BJ (cell line): ENCODE measurements at regions of chr22 and their contacts with region 1.

Region 1: DNA sequence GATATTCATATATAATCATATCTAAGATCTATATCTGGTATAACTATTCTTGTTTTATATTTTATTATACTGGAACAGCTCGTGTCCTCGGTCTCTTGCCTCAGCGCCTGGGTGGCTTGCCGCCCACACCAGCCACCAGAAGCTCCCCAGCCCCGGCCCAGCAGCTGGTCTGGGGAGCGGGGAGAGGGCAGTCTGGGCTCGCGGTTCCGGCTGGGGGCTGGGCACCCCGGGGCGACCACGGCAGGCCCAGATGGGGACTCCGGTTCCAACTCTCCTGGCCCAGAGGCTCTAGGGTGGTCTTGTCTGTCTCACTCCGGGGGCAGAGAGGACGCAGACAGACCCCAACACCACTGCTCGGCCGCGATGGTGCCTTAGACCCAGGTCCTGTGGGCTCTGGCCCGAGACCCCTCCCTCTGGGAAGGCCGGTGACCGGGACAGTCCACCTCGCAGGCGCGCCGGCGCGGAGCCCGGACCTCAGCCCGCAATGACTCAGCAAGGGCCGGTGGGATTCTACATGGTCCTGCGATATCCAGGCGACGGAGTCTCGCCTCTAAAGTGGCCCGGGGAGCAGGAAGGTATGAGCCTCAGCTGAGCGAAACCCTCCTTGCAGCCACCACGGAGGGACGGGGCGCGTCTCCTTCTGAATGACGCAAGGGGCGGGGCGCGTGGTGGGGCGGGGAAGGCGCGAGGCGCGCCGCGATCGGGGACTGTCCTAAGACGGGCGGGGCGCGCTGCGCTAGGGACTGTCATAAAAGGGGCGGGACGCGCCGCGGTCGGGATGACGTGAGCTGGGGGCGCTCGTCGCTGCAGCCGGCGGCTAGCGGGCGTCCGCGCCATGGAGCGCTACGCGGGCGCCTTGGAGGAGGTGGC is at the start of gene DGCR6:
- DNase-seq: no peak
- H3K4me3 ChIP-seq: no peak within 1 kb of the TSS
- H3K27me3 ChIP-seq: no peaks in the 10 kb centered on the region
- CTCF ChIP-seq: no peak
- polyA plus RNA-seq, gene DGCR6: 0.29 and 0.77 TPM in 2 replicates

Region 2: GRCh38 chr22:18929459-18929858 is 23.7 kb after region 1 on chr22:
- CTCF ChIA-PET with region 1: interaction called, 11 read pairs
- POLR2A ChIA-PET with region 1: no interaction called
- DNase-seq: no peak
- H3K4me3 ChIP-seq: no peak overlapping the region
- H3K27me3 ChIP-seq: no peaks in the 10 kb centered on the region
- CTCF ChIP-seq: no peak